ENCODE measurements at regions of chr19 and their contacts with region 1.

Region 1: DNA sequence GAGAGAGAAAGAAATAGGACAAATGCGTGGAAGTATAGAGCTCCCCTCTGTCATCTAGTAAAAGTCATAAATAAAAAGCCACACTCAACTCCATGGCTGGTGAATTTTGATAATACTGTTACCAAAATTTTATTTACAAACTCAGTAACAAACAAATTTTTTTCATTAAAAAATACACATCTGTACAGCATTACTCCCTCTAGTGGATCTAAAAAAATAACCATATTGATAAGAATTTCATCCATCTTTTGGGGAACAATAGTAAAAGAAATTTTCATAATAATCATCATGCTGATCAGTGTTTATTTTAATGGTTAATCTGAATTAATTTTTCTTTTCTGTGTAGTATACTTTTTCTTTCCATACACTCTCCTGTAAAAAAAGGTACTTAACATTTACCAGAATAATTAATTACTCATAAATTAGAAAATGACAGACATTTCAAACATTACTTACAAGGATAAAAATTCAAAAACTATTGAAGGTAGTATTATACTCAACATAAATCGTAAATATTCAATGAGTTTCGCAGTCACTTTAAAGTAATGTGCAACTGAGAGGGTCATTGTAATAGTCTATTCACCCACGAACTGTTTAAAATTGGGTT is 173.5 kb upstream of the LSM14A start:
- DNase-seq: no peak
- H3K4me3 ChIP-seq: no peak overlapping the region
- H3K27me3 ChIP-seq: no peaks in the 10 kb centered on the region
- CTCF ChIP-seq: peak; percentile 20; the same call in 1 of the 2 replicates

Region 2: DNA sequence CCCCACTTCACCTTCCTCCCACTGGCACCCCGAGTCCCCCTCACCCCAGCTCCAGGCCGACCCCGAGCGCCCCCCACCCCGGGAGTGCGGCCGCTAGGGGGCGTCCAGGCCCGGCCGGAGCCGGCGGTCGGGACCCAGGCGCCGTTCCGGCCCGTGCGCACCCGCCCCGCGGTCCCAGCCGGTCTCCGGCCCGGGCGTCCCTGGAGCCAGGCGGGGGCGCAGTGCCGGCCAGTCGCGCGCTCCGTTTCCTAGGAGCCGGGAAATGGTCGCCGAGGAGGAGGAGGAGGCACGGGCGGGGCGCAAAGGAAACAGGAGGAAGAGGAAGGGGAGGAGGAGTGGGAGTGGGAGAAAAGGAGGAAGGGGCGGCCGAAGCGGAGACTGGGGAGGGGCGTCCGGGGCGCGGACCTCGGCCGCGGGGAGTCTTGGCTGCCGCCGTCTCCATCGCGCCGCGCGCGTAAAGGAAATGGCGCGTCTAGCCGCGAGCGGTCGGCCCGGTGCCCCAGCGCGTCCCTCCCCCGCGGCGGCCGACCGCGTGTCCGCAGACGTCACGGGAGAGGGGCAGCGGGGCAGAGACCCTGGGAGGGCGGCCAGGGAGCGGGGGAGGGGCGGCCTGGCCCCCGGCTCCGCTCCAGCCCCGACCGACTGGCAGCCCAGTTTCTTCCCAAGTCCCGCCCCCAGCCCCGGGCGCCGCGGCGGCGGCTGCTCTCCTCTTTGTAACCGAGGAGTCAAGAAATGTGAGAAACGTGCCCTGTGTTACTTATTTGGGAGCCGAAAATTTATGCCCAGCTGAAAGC is 203.3 kb before region 1 on chr19:
- CTCF ChIA-PET with region 1: interaction called, 11 read pairs
- POLR2A ChIA-PET with region 1: no interaction called
- DNase-seq: peak; percentile 27
- H3K4me3 ChIP-seq: peak overlapping the region; percentile 69
- H3K27me3 ChIP-seq: peaks cover 4% of the 10 kb centered on the region; the same call in 1 of the 2 replicates
- CTCF ChIP-seq: peak; percentile 69

Region 3: DNA sequence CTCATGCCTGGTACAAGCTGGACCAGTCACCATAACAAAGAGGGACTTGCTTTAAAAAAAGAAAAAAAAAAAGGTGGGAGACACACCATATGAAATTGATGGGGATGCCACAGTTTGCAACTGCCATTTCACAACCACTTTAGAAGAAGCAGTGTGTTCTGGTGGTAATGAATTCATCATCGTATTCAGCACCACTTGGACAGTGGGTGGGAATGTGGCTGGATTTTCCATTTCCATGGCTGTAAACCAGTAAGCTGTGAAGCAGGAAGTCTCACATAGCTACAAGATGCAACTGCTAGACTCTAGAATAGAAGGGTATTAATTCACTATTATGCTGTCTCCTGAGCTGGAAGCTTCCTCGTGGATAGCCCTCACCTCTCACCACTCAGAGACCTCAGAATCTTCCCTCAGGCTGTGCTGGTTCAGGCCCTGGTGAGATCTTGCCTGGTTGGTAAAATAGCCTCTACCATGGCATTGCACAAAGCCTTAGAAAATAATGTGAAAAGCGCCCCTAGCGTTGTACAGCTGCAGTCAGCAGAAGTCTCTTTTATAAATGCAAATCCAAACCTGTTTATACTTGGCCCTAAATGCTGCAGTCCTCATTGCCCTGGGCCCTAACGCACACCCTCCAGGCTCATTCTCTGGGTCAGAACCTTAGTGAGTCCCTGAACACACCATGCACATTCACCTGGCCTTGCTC is 51.4 kb before region 1 on chr19:
- CTCF ChIA-PET with region 1: interaction called, 11 read pairs
- POLR2A ChIA-PET with region 1: no interaction called
- DNase-seq: no peak
- H3K4me3 ChIP-seq: no peak overlapping the region
- H3K27me3 ChIP-seq: no peaks in the 10 kb centered on the region
- CTCF ChIP-seq: peak; percentile 18; the same call in 1 of the 2 replicates

Region 4: GRCh38 chr19:33988586-33988985 is 10.3 kb before region 1 on chr19:
- CTCF ChIA-PET with region 1: interaction called, 12 read pairs
- POLR2A ChIA-PET with region 1: no interaction called
- DNase-seq: no peak
- H3K4me3 ChIP-seq: no peak overlapping the region
- H3K27me3 ChIP-seq: no peaks in the 10 kb centered on the region
- CTCF ChIP-seq: no peak

Region 5: GRCh38 chr19:34017024-34017423 is 18.2 kb after region 1 on chr19:
- CTCF ChIA-PET with region 1: interaction called, 10 read pairs
- POLR2A ChIA-PET with region 1: no interaction called
- DNase-seq: no peak
- H3K4me3 ChIP-seq: no peak overlapping the region
- H3K27me3 ChIP-seq: peaks cover 5% of the 10 kb centered on the region
- CTCF ChIP-seq: no peak

Region 6: GRCh38 chr19:34096020-34096915 is 97.4 kb after region 1 on chr19:
- CTCF ChIA-PET with region 1: interaction called, 12 read pairs
- POLR2A ChIA-PET with region 1: no interaction called
- DNase-seq: no peak
- H3K4me3 ChIP-seq: no peak overlapping the region
- H3K27me3 ChIP-seq: no peaks in the 10 kb centered on the region
- CTCF ChIP-seq: peak; percentile 54